Right ventricle myocardium inferior (tissue), 1 donor: ENCODE measurements at regions of chr13 and their contacts with region 1.

Region 1: DNA sequence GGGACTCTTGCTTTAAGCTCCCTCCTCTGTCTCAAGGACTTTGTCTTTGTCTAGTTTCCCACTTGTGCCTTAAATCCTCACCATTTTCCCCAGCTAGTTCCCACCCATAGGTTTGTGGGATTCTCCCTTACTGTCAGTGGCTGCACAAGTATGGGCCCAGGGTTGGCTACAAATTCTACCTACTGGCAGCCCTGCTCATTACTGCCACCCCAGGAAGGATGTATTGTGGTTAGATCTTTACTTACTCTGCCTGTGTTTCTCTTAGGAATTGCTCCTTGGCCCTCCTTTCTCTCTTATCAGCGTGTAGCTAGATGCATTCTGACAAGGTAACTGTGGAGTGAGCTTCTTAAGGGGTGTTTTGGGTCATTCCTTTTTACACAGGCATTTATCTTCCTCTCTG is 413.5 kb upstream of the PCDH9 start:
- DNase-seq: no peak
- ATAC-seq: no peak

Region 2: GRCh38 chr13:67462098-67462497 is 181.6 kb before region 1 on chr13:
- intact Hi-C with region 1: no loop called
- DNase-seq: no peak
- ATAC-seq: no peak

Region 3: DNA sequence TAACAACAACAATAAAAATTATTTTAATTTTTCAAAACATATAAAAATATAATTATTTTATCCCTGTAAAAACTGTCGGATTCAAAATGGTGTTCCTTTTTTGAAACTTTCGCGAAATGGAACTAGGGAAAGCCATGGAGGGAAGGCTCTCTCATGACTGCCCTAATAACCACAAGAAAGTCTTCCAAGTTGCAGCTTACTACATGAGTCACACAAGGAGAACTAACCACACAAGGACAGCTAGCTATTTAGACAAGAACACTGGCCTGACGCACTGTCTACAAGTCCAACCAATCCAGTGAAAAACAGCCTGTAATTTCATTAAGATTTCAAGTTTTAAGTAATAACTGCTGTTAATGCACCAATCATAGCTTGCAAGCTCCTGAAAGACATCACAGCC is 94.3 kb before region 1 on chr13:
- intact Hi-C with region 1: loop called (anchors 5 kb)
- DNase-seq: no peak
- ATAC-seq: no peak

Region 4: DNA sequence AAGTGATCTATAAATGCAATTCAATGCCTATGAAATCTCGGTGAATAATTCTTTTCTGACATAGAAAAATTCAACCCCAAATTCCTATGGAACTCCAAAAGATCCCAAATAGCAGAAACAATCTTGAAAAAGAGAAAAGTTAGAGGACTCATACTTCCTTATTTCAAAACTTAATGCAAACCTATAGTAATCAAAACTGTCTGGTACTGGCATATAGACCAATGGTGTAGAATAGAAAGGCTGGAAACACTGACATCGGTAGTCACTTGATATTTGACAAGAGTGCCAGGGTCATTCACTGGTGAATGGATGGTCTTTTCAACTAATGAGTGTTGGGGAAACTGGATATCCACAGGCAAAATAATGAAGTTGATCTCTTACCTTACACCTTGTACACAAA is 223.6 kb after region 1 on chr13:
- intact Hi-C with region 1: no loop called
- DNase-seq: no peak
- ATAC-seq: no peak